ENCODE measurements at regions of chr7 and their contacts with region 1.

Region 1: DNA sequence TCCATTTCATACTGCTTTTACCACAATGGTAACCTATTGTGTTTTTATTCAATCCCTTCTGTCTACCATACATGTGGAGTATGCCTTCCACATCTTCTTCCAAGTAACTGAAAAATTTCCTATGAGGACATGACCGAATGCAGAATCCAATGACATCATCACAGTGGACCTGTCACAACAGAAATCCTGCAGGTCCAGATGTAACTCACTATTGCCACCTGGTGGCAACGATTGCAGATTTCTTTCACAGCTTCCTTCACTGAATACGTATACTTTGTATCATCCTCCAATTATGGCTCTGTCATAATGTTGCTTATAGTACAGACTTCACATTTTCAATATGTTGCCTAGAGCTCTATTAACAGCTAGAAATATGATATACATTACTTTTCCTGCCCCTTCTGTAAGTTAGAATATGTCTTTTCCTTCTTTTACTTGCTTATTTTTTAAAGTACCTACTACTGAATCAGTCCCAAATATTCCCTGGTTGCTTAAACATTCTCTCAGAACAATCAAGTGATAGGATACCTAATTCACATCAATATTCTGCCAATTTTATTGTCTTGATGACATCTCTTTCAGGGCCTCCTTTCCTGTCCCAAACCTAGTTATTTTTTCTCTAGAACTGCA is 45.4 kb downstream of the SLC13A1 start:
- DNase-seq: peak; percentile 43
- ATAC-seq: peak; percentile 83

Region 2: GRCh38 chr7:122225874-122226273 is 928.5 kb before region 1 on chr7:
- intact Hi-C with region 1: loop called (anchors 10 kb)
- DNase-seq: no peak
- ATAC-seq: no peak

Region 3: GRCh38 chr7:122886357-122887081 is 267.8 kb before region 1 on chr7 and contains the start of gene CADPS2:
- intact Hi-C with region 1: loop called (anchors 10 kb)
- DNase-seq: peak; percentile 87
- ATAC-seq: peak; percentile 95
- total RNA-seq, gene CADPS2: 20.3 TPM